ENCODE measurements at regions of chr12 and their contacts with region 1.

Region 1: GRCh38 chr12:1594261-1595025 is at the start of gene FBXL14:
- DNase-seq: peak; percentile 97
- H3K4me3 Mint-ChIP-seq: peak within 1 kb of the TSS; percentile 99
- H3K27ac Mint-ChIP-seq: peak within 1 kb of the TSS; percentile 96
- H3K4me1 Mint-ChIP-seq: peaks cover 40% of the 10 kb centered on the region
- H3K27me3 Mint-ChIP-seq: no peaks in the 10 kb centered on the region
- total RNA-seq, gene FBXL14: 17.4 and 18.8 TPM in 2 replicates

Region 2: DNA sequence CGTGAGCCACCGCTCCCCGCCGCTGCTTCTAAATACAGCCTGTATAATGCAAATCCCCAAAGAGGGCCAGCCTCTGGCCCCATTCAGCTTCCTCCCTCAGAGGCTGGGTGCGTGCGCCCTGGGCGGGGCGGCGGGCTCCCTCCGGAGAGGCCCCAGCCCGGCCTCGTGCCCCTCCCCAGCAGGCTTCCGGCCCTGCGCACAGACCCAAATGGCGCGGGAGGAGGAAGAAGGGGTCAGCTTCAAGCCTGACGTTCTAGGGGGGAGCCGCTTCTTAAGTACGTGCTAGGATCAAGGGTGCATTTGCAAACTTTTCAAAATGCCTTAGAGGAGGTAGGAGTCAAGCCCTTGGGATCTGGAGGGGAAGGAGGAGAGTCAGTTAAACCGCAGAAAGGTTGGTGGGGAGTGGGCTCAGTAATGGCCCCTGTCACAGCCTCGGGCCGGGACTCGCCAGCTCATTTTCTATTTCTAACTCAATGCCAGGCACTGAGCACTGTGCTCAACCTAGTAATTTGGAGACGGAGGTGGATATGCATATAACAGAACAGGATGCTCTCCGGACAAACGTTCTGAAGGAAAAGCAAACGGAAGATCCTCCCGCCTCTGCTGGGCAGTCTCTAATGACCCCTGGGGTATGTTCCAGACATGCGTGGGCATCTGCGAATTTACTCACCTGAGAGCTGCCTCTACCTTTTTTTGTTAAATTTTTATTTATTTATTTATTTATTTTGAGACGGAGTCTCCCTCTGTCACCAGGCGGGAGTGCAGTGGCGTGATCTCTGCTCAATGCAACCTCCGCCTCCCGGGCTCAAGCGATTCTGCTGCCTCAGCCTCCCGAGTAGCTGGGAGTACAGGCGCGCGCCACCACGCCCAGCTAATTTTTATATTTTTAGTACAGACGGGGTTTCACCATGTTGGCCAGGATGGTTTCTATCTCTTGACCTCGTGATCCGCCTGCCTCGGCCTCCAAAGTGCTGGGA is 963.5 kb before region 1 on chr12:
- intact Hi-C with region 1: loop called (anchors 5 kb)
- DNase-seq: peak; percentile 96
- H3K4me3 Mint-ChIP-seq: peak overlapping the region; percentile 93
- H3K27ac Mint-ChIP-seq: peak overlapping the region; percentile 99
- H3K4me1 Mint-ChIP-seq: peaks cover 42% of the 10 kb centered on the region
- H3K27me3 Mint-ChIP-seq: no peaks in the 10 kb centered on the region

Region 3: DNA sequence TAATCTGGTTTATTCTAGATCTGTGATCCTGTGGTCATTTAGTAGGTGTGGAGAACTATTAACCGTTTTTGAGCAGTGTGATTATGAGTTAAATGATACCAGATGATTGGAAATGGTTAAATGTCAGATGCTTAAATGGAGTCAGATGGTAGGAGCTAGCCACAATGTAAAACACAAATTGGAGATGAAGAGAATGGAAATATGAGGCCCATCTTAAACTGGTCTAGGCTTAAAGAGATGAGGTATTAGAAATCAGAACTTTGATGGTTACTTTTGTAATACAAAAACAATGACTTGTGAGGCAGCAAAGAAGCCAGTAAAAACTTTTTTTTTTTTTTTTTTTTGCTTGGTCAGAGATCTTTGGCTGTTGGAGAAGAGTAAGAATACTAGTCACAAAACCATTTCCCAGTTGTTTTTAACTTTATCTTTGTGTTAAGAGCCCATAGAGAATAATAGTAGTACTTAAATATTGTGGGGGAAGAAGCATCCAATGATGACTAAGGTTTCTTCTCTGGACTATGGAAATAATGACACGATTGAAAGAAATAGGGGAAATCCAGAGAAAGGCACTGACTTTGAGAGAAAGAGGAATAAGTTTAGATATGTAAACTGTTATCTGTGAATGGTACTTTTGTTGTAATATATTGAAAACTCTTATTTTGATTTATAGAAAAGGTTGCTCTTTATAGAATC is 746.1 kb before region 1 on chr12:
- intact Hi-C with region 1: loop called (anchors 5 kb)
- DNase-seq: no peak
- H3K4me3 Mint-ChIP-seq: peak overlapping the region; percentile 14
- H3K27ac Mint-ChIP-seq: peak overlapping the region; percentile 87
- H3K4me1 Mint-ChIP-seq: peaks cover 34% of the 10 kb centered on the region
- H3K27me3 Mint-ChIP-seq: no peaks in the 10 kb centered on the region

Region 4: DNA sequence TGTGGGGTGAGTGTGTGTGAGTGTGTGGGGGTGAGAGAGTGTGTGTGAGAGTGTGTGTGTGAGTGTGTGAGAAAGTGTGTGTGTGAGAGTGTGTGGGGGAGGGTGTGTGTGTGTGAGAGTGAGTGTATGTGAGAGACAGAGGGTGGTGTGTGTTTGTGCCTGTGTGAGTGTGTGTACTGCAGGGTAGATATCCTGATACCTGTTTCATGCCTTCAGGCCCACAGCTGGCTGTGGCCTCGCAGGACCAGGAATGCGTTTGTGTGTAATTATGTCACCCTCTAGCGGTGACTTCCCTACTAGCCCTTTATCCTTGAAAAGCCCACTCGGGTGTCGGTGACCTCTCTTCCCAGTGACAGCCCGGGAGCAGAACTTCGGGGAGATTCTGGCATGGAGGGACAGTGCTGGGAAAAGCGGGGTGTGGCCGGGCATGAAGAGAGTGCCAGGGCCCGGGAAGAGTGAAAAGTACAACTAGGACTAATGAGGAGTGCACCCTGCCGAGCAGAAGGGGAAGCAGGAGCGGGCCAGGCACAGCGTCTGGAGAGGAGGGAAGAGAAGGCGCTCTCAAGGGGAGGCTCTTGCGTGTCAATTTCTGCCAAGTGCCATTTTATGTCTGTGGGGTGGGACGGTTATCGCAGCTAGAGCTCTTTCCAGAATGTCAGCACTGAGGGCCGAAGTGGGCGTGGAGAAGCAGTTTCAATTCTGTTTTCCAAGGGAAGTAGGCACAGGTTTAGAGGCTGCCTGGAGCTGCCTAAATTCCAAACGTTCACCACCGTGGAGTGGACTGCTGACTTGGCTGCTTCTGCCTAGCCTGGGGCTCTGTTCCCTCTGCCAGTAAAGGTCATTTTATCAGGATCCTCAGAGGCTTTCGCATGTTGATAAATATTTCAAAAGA is 10.9 kb after region 1 on chr12:
- intact Hi-C with region 1: loop called (anchors 2 kb)
- DNase-seq: peak; percentile 90
- H3K4me3 Mint-ChIP-seq: peak overlapping the region; percentile 86
- H3K27ac Mint-ChIP-seq: peak overlapping the region; percentile 64
- H3K4me1 Mint-ChIP-seq: peaks cover 41% of the 10 kb centered on the region
- H3K27me3 Mint-ChIP-seq: peaks cover 10% of the 10 kb centered on the region